Posterior vena cava (tissue), 2 donors: ENCODE measurements at regions of chr3 and their contacts with region 1.

Region 1: DNA sequence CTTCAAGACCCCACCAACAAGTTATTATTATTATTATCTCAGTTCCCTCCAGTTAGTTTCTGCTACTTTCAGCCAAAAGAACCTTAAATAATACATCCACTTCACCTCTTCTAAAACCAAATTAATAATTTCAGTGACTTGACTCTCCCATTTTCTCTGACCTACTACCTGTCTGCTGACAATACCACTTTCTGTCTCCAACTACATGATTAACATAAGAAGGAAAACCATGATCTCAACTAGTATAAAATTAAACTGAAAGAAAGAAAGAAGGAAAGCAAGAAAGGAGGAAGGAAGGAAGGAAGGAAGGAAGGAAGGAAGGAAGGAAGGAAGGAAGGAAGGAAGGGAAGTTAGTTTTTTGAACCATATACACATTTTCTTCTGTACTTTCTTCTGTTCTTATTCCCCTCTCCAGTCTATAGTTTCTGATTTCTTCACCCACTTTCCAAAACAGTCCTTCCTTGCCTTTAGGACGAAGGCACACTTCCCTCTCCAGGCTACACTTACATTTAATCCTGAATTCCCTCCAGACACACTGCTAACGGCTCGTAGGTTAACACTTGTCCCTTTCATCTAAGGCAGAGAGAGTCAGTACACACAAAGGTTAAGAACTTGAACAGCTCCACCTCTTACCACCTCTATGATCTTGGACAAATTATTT is 79.5 kb upstream of the GUCA1C start:
- DNase-seq: no peak

Region 2: GRCh38 chr3:108959017-108959416 is 74.1 kb before region 1 on chr3:
- intact Hi-C with region 1: no loop called
- DNase-seq: no peak

Region 3: GRCh38 chr3:108976047-108976446 is 57.1 kb before region 1 on chr3:
- intact Hi-C with region 1: loop called in 1 of 2 experiments (anchors 2 kb)
- DNase-seq: no peak

Region 4: GRCh38 chr3:109480014-109480413 is 446.9 kb after region 1 on chr3:
- intact Hi-C with region 1: no loop called
- DNase-seq: no peak